ENCODE measurements at regions of chr7 and their contacts with region 1.

Region 1: DNA sequence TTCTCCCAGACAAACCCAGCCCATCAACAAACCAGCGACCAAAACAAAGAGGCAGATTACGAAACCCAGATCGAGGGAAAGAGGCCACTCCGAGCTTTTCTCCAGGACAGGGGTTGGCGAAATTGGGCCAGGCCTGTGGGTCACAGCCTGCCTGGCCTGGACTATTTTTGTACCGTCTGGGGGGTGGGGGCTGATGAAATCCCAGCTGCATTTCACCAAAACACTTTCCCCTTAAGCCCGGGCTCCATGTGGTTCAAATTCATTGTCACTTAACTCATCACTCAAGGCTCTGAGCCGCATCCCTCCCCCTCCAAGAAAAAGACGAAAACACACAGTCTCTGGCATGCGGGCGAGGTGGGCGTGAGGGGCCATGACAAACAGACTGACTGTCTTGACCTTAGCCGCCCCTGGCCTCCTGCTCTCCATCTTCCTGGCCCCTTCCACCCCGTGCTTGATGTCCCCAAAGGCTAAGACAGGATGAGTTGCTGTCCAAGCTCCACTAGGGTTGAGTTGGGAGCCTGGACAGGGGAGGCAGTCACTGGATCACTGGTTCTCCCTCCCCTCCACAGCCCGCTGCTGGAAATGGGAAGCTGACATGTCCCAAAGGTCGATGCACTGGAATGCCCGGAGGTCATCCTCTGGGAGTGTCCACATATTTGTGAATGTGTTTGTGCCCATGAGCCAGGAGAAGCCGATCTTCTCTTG is 19.2 kb downstream of the TMEM270 start:
- DNase-seq: peak; percentile 79
- ATAC-seq: peak; percentile 87

Region 2: DNA sequence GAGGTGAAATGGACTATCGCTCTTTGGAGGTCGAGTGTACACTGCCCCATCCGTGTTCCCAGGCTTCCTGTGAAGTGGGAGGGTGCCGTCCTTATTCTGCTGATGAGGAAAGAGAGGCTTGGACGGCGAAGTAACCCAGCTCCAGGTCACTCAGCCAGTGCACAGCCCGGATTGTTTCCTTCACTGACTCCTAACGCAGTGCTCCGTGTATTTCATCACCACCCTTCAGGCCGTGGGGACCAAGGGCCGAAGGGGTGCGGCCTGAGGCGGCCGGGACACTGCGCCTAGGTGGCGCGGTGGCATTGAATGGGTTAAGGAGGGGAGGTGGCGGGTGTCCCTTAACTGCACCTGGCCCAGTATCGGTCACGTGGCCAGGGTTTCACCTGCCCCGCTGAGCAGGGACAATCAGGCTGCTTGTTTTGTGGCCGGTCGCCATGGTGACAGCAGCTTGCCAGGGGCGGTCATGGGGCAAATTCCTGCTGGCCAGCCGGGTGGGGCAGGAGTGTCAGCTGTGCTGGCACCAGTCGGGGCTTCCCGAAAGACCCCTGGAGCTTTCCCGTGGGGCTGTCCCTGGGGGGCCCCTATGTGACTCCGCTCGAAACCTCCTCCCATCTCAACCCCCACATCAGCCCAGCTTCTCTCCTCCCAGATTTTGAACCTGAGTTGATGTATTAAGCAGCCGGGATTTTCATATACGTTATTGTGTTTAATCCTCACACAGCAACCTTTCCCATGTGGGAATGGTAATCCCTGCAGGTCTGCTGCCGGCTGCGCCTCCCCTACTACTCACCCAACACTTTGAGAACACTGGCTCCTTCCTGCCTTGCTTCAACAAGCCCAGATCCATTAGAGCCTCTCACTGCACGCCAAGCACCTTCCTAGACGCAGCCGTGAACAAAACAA is 137.2 kb before region 1 on chr7:
- intact Hi-C with region 1: no loop called
- DNase-seq: no peak
- ATAC-seq: no peak

Region 3: GRCh38 chr7:74026903-74027551 is 146.9 kb after region 1 on chr7:
- intact Hi-C with region 1: loop called (anchors 10 kb)
- DNase-seq: peak; percentile 90
- ATAC-seq: peak; percentile 70

Measured in left ventricle myocardium superior (tissue), 1 donor.